ENCODE measurements at regions of chr5 and their contacts with region 1.

Region 1: GRCh38 chr5:132490486-132491367 is at the start of gene IRF1:
- DNase-seq: peak; percentile 98
- CTCF ChIP-seq: peak; percentile 6

Region 2: GRCh38 chr5:132410451-132411381 is 80.0 kb before region 1 on chr5:
- CTCF ChIA-PET with region 1: interaction called, 12 read pairs
- POLR2A ChIA-PET with region 1: interaction called, 5 read pairs
- DNase-seq: peak; percentile 86
- CTCF ChIP-seq: peak; percentile 47

Region 3: GRCh38 chr5:132426525-132427138 is 64.1 kb before region 1 on chr5:
- CTCF ChIA-PET with region 1: interaction called, 60 read pairs
- POLR2A ChIA-PET with region 1: interaction called, 59 read pairs
- DNase-seq: peak; percentile 67
- CTCF ChIP-seq: peak; percentile 62

Region 4: DNA sequence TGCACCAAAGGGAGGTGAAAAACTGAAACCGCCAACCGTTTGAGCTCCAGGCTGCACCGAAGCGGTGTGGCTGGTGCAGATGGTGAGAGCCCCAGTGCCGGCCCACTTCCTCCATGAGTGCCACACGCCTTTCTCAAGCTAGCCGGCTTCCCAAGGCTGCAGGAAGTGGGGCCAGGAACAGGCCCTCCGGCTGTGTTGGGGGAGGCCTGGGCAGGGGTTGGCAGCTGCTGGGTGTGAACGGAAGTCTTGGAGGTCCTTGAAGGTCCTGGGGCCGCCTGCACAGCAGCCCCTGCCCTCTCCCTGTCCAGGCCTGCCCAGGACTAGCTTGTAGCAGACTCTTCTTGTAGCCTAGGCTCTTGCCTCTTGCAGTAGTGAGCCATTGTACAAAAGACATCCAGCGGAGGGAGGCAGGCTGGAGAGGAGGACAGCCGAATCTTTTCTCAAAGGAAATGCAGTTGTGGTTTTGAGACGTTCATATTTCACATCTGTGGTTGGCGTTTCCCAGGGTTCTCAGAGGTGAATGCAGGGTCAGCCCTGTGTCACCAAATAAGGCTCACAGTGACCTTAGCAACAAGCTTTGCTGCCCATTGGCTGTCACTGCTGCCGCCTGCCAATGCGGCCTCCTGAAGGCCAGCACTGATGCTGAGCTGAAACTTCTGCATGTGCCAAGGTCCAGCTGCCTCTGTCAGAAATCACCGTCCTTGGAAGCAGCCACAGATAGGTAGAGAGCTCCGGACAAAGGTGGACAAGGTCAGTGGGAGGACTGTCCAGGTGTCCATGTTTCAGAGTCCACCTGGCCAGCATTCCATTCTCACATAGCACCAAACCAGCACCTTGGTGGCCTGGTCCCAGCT is 24.1 kb before region 1 on chr5:
- CTCF ChIA-PET with region 1: interaction called, 11 read pairs
- POLR2A ChIA-PET with region 1: interaction called, 38 read pairs
- DNase-seq: peak; percentile 73
- CTCF ChIP-seq: no peak

Region 5: DNA sequence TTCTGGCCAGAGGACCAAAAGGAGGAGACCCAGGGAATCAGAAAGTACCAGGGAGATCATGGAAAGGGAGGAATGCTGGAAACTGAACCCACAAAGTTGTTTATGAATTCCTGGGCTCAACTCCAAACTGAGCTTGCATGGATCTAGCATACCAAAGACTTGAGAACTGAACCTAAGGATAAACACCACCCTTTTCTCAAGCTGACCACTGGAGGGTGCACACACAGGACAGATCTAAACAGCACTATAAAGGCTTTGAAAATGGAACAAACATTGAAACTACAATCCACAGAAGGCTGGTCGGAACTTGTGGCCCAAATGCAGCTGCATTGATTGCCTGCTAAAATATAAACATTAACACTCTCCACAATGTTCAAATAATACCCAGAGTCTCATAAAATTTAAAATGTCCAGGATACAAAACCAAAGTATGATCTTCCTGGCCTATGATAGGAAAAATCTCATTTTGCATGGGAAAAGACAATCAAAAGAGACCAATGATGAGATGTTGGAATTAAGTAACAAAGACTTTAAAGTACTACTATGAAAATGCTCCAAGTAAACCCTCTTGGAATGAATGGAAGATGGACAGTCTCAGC is 15.5 kb after region 1 on chr5:
- CTCF ChIA-PET with region 1: interaction called, 62 read pairs
- POLR2A ChIA-PET with region 1: interaction called, 24 read pairs
- DNase-seq: peak; percentile 62
- CTCF ChIP-seq: peak; percentile 74

Region 6: GRCh38 chr5:132540764-132541163 is 50.0 kb after region 1 on chr5:
- CTCF ChIA-PET with region 1: no interaction called
- POLR2A ChIA-PET with region 1: no interaction called
- DNase-seq: no peak
- CTCF ChIP-seq: no peak

Region 7: GRCh38 chr5:132639706-132640130 is 149.0 kb after region 1 on chr5:
- CTCF ChIA-PET with region 1: no interaction called
- POLR2A ChIA-PET with region 1: no interaction called
- DNase-seq: peak; percentile 37
- CTCF ChIP-seq: no peak

Region 8: GRCh38 chr5:133353741-133354140 is 863.0 kb after region 1 on chr5:
- CTCF ChIA-PET with region 1: no interaction called
- POLR2A ChIA-PET with region 1: no interaction called
- DNase-seq: no peak
- CTCF ChIP-seq: no peak